Naive thymus-derived CD4-positive, alpha-beta T cell (primary cell): ENCODE measurements at regions of chr6 and their contacts with region 1.

Region 1: GRCh38 chr6:29649701-29650673 is 6.9 kb upstream of the MOG start:
- DNase-seq: peak; percentile 88 to 99 (median 97)
- ATAC-seq: peak; percentile 95
- H3K4me3 ChIP-seq: peak overlapping the region; percentile 83
- H3K4me3 Mint-ChIP-seq: peak overlapping the region; percentile 74 to 98 (median 96)
- H3K27ac ChIP-seq: peak overlapping the region; percentile 94
- H3K27ac Mint-ChIP-seq: peak overlapping the region; percentile 95 to 100 (median 100)
- H3K4me1 ChIP-seq: peaks cover 4 to 7% of the 10 kb centered on the region in 2 donors
- H3K4me1 Mint-ChIP-seq: peaks cover 5 to 21% (median 13%) of the 10 kb centered on the region in 7 donors
- H3K27me3 ChIP-seq: no peaks in the 10 kb centered on the region
- H3K27me3 Mint-ChIP-seq: peaks cover 0 to 11% (median 2%) of the 10 kb centered on the region in 5 donors

Region 2: GRCh38 chr6:29624520-29624961 is 25.4 kb before region 1 on chr6:
- CTCF ChIA-PET with region 1: interaction called, 25 read pairs
- POLR2A ChIA-PET with region 1: interaction called, 20 read pairs
- intact Hi-C with region 1: loop called in 1 of 2 experiments (anchors 1 kb)
- DNase-seq: no peak
- ATAC-seq: no peak
- H3K4me3 ChIP-seq: no peak overlapping the region
- H3K4me3 Mint-ChIP-seq: no peak overlapping the region
- H3K27ac ChIP-seq: no peak overlapping the region
- H3K27ac Mint-ChIP-seq: peak overlapping the region in 2 of 9 donors; percentile 44 to 69
- H3K4me1 ChIP-seq: peaks cover 7% of the 10 kb centered on the region in 2 donors
- H3K4me1 Mint-ChIP-seq: peaks cover 14 to 26% (median 19%) of the 10 kb centered on the region in 7 donors
- H3K27me3 ChIP-seq: no peaks in the 10 kb centered on the region
- H3K27me3 Mint-ChIP-seq: peaks cover 0 to 29% (median 0%) of the 10 kb centered on the region in 5 donors

Region 3: DNA sequence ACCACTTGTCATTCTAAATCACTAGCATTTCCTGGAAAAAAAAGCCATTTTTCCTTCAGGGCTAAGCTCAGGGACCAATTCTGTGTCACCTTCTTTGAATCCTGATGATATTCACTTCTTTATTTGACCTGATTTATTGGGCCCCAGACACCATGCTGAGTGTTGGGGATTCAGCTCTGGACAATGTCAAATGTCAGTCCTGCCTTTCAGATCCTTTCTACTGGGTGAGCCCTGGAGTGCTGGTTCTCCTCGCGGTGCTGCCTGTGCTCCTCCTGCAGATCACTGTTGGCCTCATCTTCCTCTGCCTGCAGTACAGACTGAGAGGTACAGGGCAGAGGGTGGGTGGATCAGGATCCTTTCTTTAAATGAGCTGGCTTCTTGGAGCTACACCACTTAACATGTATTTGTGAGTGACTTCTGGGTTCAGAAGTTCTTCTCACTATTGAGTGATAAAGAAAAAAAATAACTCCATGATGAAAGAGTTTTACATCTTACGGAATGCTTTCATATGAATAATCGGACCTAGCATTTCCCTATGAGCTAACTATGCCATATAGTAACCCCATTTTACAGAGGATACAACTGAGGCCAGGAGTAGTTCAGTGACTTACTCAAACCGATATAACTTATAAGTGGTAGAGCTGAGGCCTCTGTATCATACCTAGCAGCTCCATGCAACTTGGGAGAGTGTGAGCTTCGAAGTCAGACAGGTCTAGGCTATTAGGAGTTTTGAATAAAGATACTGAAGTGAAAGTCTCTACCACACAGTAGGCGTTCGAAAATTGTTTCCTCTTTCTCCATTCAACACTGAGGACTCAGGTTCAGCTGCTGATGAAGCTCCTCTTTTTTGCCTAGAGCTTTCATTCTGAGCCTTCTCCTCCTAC is 16.2 kb after region 1 on chr6:
- CTCF ChIA-PET with region 1: interaction called, 39 read pairs
- POLR2A ChIA-PET with region 1: interaction called, 8 read pairs
- intact Hi-C with region 1: no loop called
- DNase-seq: no peak
- ATAC-seq: no peak
- H3K4me3 ChIP-seq: no peak overlapping the region
- H3K4me3 Mint-ChIP-seq: no peak overlapping the region
- H3K27ac ChIP-seq: no peak overlapping the region
- H3K27ac Mint-ChIP-seq: peak overlapping the region in 1 of 9 donors; percentile 10
- H3K4me1 ChIP-seq: no peaks in the 10 kb centered on the region
- H3K4me1 Mint-ChIP-seq: no peaks in the 10 kb centered on the region
- H3K27me3 ChIP-seq: peaks cover 0 to 6% of the 10 kb centered on the region in 2 donors
- H3K27me3 Mint-ChIP-seq: peaks cover 23 to 50% (median 36%) of the 10 kb centered on the region in 5 donors

Region 4: GRCh38 chr6:29723262-29723665 is 73.3 kb after region 1 on chr6 and contains the start of gene HLA-F:
- CTCF ChIA-PET with region 1: interaction called, 8 read pairs
- POLR2A ChIA-PET with region 1: interaction called, 3 read pairs
- intact Hi-C with region 1: loop called (anchors 5 kb)
- DNase-seq: peak; percentile 56 to 87 (median 79)
- ATAC-seq: peak; percentile 91
- H3K4me3 ChIP-seq: peak within 1 kb of the TSS; percentile 98
- H3K4me3 Mint-ChIP-seq: peak within 1 kb of the TSS; percentile 82 to 97 (median 95)
- H3K27ac ChIP-seq: peak within 1 kb of the TSS; percentile 100
- H3K27ac Mint-ChIP-seq: peak within 1 kb of the TSS; percentile 92 to 98 (median 95)
- H3K4me1 ChIP-seq: peaks cover 47 to 48% of the 10 kb centered on the region in 2 donors
- H3K4me1 Mint-ChIP-seq: peaks cover 32 to 63% (median 50%) of the 10 kb centered on the region in 7 donors
- H3K27me3 ChIP-seq: no peaks in the 10 kb centered on the region
- H3K27me3 Mint-ChIP-seq: no peaks in the 10 kb centered on the region
- total RNA-seq, gene HLA-F: 502 to 678 (median 522) TPM

Region 5: DNA sequence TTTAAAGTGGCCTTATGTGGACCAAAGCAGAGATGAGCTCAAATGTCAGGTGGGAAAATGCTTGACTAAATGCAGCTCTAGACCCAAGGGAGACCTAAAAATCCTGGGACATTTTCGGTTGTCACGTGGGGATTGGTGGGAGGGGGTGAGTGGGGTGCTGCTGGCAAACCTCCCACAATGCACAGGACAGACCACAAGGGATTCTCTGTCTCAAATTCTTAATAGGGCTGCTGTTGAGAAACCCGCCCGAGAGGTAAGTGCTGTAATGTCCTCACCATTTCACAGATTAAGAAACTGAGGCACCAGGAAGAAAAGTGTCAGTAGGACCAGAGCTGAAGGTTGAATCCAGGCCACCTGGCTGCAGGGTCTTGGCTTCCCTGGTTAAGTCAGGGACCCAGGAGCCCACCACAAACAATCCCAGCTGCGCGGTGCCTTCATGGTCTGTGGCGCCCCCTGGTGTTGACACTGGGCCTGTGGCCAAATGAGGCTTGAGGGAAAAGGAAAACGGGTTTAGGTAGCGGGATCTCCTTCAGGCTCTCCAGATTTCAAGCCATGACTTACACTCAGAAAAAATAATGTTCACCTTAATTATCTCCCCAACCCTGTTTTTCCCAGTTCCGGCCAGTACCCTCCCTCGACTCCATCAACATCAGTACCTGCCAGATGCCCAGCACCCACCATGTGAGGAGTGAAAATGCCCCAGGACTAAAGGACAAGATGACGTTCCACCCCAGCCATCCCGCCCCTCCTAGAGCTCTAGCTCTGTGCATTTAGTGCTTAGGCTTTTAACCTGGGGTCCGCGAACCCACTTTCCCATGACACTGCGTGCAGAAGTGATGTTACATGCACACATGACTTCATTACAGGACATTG is 184.8 kb after region 1 on chr6:
- CTCF ChIA-PET with region 1: interaction called, 3 read pairs
- POLR2A ChIA-PET with region 1: no interaction called
- intact Hi-C with region 1: loop called in 1 of 2 experiments (anchors 2 kb)
- DNase-seq: peak in 8 of 9 donors; percentile 34 to 60 (median 47)
- ATAC-seq: peak; percentile 77
- H3K4me3 ChIP-seq: no peak overlapping the region
- H3K4me3 Mint-ChIP-seq: no peak overlapping the region
- H3K27ac ChIP-seq: no peak overlapping the region
- H3K27ac Mint-ChIP-seq: no peak overlapping the region
- H3K4me1 ChIP-seq: no peaks in the 10 kb centered on the region
- H3K4me1 Mint-ChIP-seq: peaks cover 0 to 11% (median 0%) of the 10 kb centered on the region in 7 donors
- H3K27me3 ChIP-seq: no peaks in the 10 kb centered on the region
- H3K27me3 Mint-ChIP-seq: peaks cover 46 to 79% (median 67%) of the 10 kb centered on the region in 5 donors

Region 6: GRCh38 chr6:30156262-30156599 is 506.2 kb after region 1 on chr6:
- CTCF ChIA-PET with region 1: no interaction called
- POLR2A ChIA-PET with region 1: no interaction called
- intact Hi-C with region 1: no loop called
- DNase-seq: no peak
- ATAC-seq: no peak
- H3K4me3 ChIP-seq: no peak overlapping the region
- H3K4me3 Mint-ChIP-seq: no peak overlapping the region
- H3K27ac ChIP-seq: no peak overlapping the region
- H3K27ac Mint-ChIP-seq: no peak overlapping the region
- H3K4me1 ChIP-seq: no peaks in the 10 kb centered on the region
- H3K4me1 Mint-ChIP-seq: peaks cover 0 to 27% (median 4%) of the 10 kb centered on the region in 7 donors
- H3K27me3 ChIP-seq: no peaks in the 10 kb centered on the region
- H3K27me3 Mint-ChIP-seq: peaks cover 9 to 36% (median 19%) of the 10 kb centered on the region in 5 donors